PC-3 (cell line): ENCODE measurements at regions of chr9 and their contacts with region 1.

Region 1: DNA sequence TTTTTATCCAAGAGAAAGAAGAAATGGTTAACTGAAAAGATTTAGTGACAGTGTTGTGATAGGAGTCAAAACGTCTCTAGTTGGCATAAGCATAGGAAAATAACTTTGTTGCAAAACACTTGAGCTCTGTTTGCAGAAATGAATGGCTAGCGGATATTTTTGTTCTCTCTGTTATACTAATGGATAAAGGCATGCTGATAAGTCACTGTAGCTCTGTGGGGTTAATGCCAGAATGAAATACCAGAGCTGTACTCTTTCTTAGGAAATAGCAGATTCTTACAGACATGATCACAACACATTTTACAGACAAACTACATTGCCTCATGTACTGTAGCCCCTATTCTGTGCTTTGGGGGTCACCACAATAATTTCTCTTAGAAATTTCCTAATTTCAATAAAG is 202.8 kb downstream of the DMRTA1 start:
- DNase-seq: no peak
- ATAC-seq: no peak
- H3K4me3 ChIP-seq: no peak overlapping the region
- H3K27ac ChIP-seq: no peak overlapping the region
- H3K4me1 ChIP-seq: no peaks in the 10 kb centered on the region; the same call in 1 of the 2 replicates
- H3K27me3 ChIP-seq: no peaks in the 10 kb centered on the region
- CTCF ChIP-seq: no peak

Region 2: GRCh38 chr9:22986556-22986955 is 337.2 kb after region 1 on chr9:
- CTCF ChIA-PET with region 1: no interaction called
- POLR2A ChIA-PET with region 1: interaction called, 13 read pairs
- intact Hi-C with region 1: no loop called
- DNase-seq: peak; percentile 9
- ATAC-seq: no peak
- H3K4me3 ChIP-seq: no peak overlapping the region
- H3K27ac ChIP-seq: no peak overlapping the region
- H3K4me1 ChIP-seq: no peaks in the 10 kb centered on the region
- H3K27me3 ChIP-seq: no peaks in the 10 kb centered on the region
- CTCF ChIP-seq: peak; percentile 39; the same call in 1 of the 2 replicates